Activated CD4-positive, alpha-beta T cell treated with anti-CD3 and anti-CD28 coated beads, Interleukin-2, amount 10 ng/mL, durations not matched to agents 24 days and 14 days (primary cell): ENCODE measurements at regions of chr1 and their contacts with region 1.

Region 1: GRCh38 chr1:202009326-202010179 is 834 bp upstream of the ELF3 start:
- DNase-seq: peak; percentile 89
- H3K4me3 Mint-ChIP-seq: no peak overlapping the region
- H3K27ac Mint-ChIP-seq: no peak overlapping the region
- H3K4me1 Mint-ChIP-seq: peaks cover 2% of the 10 kb centered on the region
- H3K27me3 Mint-ChIP-seq: no peaks in the 10 kb centered on the region

Region 2: DNA sequence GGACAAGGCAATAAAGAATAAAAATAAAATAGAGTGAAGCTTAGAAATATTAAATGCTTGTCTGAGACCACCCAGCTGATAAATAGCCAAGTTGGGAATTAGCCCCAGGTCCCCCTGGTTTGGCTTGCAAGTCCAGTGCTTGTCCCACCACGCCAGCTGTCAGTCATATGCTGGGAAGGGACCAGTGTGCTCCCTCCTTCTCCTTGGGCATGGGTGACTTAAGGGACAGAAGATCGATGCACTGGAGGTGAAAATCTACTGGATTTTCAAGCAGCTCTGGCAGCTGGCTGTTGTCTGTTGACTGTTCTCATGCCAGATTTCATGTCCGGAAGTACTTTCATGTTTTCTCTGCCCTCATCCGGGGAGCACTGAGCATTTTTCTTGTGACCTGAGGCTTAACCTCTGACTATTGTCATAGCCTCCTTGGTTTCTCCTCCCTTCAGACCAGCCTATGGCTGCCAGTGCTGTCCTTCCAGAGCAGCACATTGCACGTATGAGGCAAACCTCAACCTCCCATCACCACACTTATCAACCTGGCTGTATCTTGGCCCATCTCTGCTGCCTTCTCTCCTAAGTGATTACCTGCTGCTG is 75.6 kb before region 1 on chr1:
- intact Hi-C with region 1: no loop called
- DNase-seq: no peak
- H3K4me3 Mint-ChIP-seq: no peak overlapping the region
- H3K27ac Mint-ChIP-seq: no peak overlapping the region
- H3K4me1 Mint-ChIP-seq: no peaks in the 10 kb centered on the region
- H3K27me3 Mint-ChIP-seq: peaks cover 20% of the 10 kb centered on the region

Region 3: GRCh38 chr1:202117865-202118371 is 108.4 kb after region 1 on chr1:
- intact Hi-C with region 1: loop called (anchors 2 kb)
- DNase-seq: no peak
- H3K4me3 Mint-ChIP-seq: no peak overlapping the region
- H3K27ac Mint-ChIP-seq: no peak overlapping the region
- H3K4me1 Mint-ChIP-seq: no peaks in the 10 kb centered on the region
- H3K27me3 Mint-ChIP-seq: peaks cover 7% of the 10 kb centered on the region

Region 4: DNA sequence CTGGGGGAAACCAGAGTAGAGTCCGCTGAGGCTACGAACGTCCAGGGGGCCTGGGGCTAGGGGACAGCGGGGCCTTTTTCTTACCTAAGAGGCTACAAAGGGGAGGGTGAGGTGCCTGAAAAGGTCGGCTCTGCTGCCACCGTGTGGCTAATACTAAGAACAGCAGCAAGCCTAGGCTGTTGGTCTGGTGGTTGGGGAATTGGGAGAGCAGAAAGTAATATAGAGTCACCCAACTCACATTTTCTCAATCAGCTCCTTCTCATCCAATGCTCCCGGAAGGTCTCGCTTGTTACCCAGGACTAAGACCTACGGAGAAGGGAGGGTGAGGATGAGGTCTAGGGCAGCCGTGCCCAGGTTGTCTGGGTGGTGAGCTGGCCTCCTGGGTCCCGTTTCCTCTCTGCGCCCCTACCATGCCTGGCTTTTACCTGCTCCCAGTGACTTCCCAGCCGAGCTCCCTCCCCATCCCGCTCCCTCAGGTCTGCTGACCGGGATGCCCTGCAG is 125.7 kb after region 1 on chr1:
- intact Hi-C with region 1: loop called (anchors 1 kb)
- DNase-seq: peak; percentile 87
- H3K4me3 Mint-ChIP-seq: no peak overlapping the region
- H3K27ac Mint-ChIP-seq: no peak overlapping the region
- H3K4me1 Mint-ChIP-seq: peaks cover 5% of the 10 kb centered on the region
- H3K27me3 Mint-ChIP-seq: no peaks in the 10 kb centered on the region

Region 5: DNA sequence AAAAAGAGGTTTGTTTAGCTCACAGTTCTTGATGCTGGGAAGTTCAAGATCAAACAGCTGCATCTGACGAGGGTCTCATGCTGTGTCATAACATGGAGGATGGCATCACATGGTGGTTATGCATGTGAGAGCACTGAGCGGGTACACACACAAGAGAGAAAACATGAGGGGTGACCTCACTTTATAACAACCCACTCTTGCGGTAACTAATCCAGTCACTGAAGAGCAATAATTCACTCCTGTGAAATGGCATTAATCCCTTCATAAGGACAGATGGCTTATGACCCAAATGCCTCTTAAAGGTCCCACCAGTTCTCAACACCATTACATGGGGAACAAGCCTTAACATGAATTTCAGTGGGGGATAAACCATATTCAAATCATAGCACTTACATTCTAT is 1243.1 kb after region 1 on chr1:
- intact Hi-C with region 1: no loop called
- DNase-seq: no peak
- H3K4me3 Mint-ChIP-seq: no peak overlapping the region
- H3K27ac Mint-ChIP-seq: no peak overlapping the region
- H3K4me1 Mint-ChIP-seq: no peaks in the 10 kb centered on the region
- H3K27me3 Mint-ChIP-seq: peaks cover 40% of the 10 kb centered on the region